Activated CD8-positive, alpha-beta T cell treated with anti-CD3 and anti-CD28 coated beads, Interleukin-2, amount 10 ng/mL, durations not matched to agents 7 days and 5 days (primary cell): ENCODE measurements at regions of chr15 and their contacts with region 1.

Region 1: DNA sequence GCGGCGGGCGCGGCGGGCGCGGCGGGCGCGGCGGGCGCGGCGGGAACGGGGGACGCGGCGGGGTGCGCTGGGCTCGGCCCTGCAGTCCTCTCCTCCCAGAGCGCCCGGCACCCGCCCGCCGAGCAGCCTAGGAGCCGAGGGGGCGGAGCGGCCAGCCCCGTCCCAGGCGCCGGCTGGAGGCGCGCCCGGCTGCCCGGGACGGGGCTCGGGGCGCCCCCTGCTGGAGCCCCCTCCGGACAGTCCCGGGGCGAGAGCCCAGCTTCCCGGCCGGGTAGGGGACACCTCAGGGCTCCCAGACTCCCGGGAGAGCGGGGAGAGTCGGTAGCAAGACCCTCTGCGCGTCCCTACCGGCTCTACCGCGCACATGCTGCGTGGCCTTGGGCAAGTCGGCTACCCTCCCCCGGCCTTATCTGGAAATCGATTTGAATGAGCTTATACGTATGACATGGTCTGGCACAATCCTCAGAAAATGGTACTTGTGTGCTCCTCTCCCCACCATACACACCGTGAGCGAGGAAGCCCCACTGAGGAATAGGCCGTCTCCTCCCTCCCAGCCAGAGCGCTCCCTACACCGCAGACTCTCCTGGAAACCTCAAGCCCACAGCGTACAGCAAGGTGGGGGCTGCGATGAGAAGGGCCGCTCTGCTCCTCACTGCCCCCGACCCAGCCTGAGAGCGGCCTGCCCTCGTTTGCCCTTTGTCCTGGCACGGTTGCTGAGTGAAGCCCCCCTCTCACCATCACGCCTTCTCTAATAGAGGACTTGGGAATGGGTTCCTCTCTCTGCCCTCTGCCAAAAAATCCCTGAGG is at the start of gene DAPK2:
- DNase-seq: peak; percentile 62
- ATAC-seq: peak; percentile 95
- H3K4me3 Mint-ChIP-seq: peak within 1 kb of the TSS; percentile 70
- H3K27ac Mint-ChIP-seq: peak within 1 kb of the TSS; percentile 31
- H3K4me1 Mint-ChIP-seq: peaks cover 13% of the 10 kb centered on the region
- H3K27me3 Mint-ChIP-seq: peaks cover 34% of the 10 kb centered on the region
- total RNA-seq, gene DAPK2: 1.3 to 1.5 TPM

Region 2: DNA sequence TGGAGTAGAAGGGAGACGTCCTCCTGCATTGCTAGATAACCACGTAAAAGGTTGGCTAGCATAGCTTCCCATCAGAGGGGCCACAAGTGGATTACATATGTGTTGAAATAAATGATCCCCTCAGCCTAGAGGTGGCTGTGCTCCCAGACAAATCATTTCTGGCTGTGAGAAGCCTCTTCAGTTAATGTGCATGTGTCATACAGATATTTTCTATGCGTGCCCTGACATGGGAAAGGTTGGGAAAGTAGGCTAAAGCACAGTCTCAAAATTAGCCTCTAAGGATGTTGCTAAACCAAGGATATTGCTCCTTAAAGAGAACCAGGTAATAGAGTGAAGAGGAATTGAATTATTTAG is 524.3 kb before region 1 on chr15:
- CTCF ChIA-PET with region 1: no interaction called
- POLR2A ChIA-PET with region 1: no interaction called
- DNase-seq: no peak
- ATAC-seq: no peak
- H3K4me3 Mint-ChIP-seq: no peak overlapping the region
- H3K27ac Mint-ChIP-seq: no peak overlapping the region
- H3K4me1 Mint-ChIP-seq: peaks cover 37% of the 10 kb centered on the region
- H3K27me3 Mint-ChIP-seq: no peaks in the 10 kb centered on the region

Region 3: GRCh38 chr15:63818191-63818590 is 228.4 kb before region 1 on chr15:
- CTCF ChIA-PET with region 1: interaction called, 12 read pairs
- POLR2A ChIA-PET with region 1: no interaction called
- DNase-seq: no peak
- ATAC-seq: no peak
- H3K4me3 Mint-ChIP-seq: no peak overlapping the region
- H3K27ac Mint-ChIP-seq: peak overlapping the region; percentile 24
- H3K4me1 Mint-ChIP-seq: peaks cover 49% of the 10 kb centered on the region
- H3K27me3 Mint-ChIP-seq: no peaks in the 10 kb centered on the region

Region 4: DNA sequence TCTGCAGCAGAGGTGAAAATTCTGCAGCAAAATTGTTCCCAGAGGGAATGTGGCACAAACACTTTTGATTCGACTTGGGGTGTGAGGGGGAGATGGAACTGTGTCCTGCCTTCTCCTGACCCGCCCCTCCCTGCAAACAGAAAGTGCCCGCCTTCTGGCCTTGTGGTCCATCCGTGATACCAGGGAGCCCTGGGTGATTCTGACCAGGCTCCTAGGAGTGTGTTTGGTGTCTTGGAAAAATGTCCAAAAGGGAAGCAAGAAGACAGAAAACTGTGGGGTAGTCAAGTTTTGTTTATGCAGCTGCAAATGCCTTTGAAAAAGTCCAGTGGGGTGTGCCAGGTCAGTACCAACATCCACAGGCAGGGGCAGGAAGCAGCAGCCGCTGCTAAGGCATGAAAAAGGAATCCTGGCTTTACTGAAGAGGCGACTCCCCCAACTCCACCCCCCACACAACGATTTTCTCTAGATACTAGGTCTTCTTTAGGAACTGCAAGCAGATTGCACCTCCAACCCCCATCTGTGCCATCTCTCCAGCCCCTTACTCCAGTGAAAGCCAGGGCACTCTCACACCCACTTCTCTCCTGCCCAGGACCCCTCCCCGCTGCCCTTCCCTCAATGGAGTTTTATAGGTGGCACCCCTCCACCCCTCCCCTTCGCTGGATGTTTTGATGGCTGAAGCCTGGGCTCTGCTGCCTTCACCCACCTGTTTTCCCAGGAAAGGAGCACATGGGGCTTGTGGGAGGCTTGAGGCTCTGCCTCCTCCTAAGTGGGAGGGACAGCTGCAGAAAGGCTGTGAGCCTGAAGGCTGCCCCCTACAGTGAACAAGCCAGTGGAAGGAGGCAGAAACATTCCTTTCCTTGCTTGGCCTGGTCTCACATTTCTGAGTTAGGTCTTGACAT is 130.4 kb before region 1 on chr15:
- CTCF ChIA-PET with region 1: interaction called, 11 read pairs
- POLR2A ChIA-PET with region 1: no interaction called
- DNase-seq: no peak
- ATAC-seq: no peak
- H3K4me3 Mint-ChIP-seq: no peak overlapping the region
- H3K27ac Mint-ChIP-seq: no peak overlapping the region
- H3K4me1 Mint-ChIP-seq: peaks cover 17% of the 10 kb centered on the region
- H3K27me3 Mint-ChIP-seq: no peaks in the 10 kb centered on the region

Region 5: GRCh38 chr15:64029110-64029509 is 17.4 kb before region 1 on chr15:
- CTCF ChIA-PET with region 1: interaction called, 35 read pairs
- POLR2A ChIA-PET with region 1: interaction called, 4 read pairs
- DNase-seq: no peak
- ATAC-seq: no peak
- H3K4me3 Mint-ChIP-seq: no peak overlapping the region
- H3K27ac Mint-ChIP-seq: no peak overlapping the region
- H3K4me1 Mint-ChIP-seq: peaks cover 39% of the 10 kb centered on the region
- H3K27me3 Mint-ChIP-seq: no peaks in the 10 kb centered on the region

Region 6: GRCh38 chr15:64216730-64217428 is 170.3 kb after region 1 on chr15:
- CTCF ChIA-PET with region 1: no interaction called
- POLR2A ChIA-PET with region 1: no interaction called
- DNase-seq: no peak
- ATAC-seq: no peak
- H3K4me3 Mint-ChIP-seq: no peak overlapping the region
- H3K27ac Mint-ChIP-seq: no peak overlapping the region
- H3K4me1 Mint-ChIP-seq: peaks cover 3% of the 10 kb centered on the region
- H3K27me3 Mint-ChIP-seq: no peaks in the 10 kb centered on the region

Region 7: GRCh38 chr15:64263567-64263966 is 217.0 kb after region 1 on chr15:
- CTCF ChIA-PET with region 1: no interaction called
- POLR2A ChIA-PET with region 1: no interaction called
- DNase-seq: no peak
- ATAC-seq: no peak
- H3K4me3 Mint-ChIP-seq: no peak overlapping the region
- H3K27ac Mint-ChIP-seq: no peak overlapping the region
- H3K4me1 Mint-ChIP-seq: peaks cover 25% of the 10 kb centered on the region
- H3K27me3 Mint-ChIP-seq: no peaks in the 10 kb centered on the region

Region 8: DNA sequence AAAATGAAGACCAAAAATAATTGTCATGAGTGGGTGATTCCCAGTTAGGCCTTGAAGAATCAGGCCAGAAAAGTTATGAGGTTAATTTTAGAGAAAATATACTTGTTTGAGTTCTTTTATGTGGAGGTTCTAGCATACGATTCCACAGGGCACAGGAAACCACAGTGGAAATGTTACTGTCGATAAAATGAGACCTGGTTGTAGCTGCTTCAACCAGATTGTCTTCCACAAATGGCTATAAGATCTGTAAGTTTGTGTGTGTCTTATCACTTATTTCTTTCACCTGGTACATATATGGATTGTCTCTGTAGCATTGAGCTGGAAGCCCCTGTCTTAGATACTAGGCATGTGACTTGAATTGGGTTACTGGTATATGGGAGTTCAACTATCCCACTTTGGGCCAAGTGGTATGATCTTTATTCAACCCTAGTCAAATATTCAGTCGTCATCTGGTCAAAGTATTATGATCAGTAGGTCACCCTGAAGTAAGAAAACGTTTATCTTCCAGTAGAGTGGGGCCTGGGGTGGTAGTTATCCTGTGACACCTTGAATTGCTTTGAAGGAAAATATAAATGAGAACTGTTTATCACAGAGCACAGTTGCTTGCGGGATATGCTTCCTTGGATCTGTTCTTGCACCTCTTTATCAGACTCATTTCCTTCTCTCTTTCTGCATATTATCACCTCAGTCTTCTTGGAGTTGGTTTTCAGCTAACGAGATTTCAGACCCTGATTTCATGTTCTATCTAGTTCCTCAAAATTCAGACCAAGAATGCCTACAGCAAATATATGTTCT is 392.3 kb after region 1 on chr15:
- CTCF ChIA-PET with region 1: no interaction called
- POLR2A ChIA-PET with region 1: no interaction called
- DNase-seq: no peak
- ATAC-seq: peak; percentile 59
- H3K4me3 Mint-ChIP-seq: no peak overlapping the region
- H3K27ac Mint-ChIP-seq: peak overlapping the region; percentile 68
- H3K4me1 Mint-ChIP-seq: peaks cover 38% of the 10 kb centered on the region
- H3K27me3 Mint-ChIP-seq: no peaks in the 10 kb centered on the region